Ascending aorta (tissue), 2 donors: ENCODE measurements at regions of chr5 and their contacts with region 1.

Region 1: GRCh38 chr5:126676195-126676624 is 75.5 kb downstream of the PHAX start:
- DNase-seq: peak in 1 of 2 donors; percentile 67
- H3K4me3 ChIP-seq: no peak overlapping the region
- H3K27ac ChIP-seq: no peak overlapping the region
- H3K4me1 ChIP-seq: no peaks in the 10 kb centered on the region
- H3K27me3 ChIP-seq: no peaks in the 10 kb centered on the region
- CTCF ChIP-seq: peak; percentile 61 to 78 (median 63)

Region 2: DNA sequence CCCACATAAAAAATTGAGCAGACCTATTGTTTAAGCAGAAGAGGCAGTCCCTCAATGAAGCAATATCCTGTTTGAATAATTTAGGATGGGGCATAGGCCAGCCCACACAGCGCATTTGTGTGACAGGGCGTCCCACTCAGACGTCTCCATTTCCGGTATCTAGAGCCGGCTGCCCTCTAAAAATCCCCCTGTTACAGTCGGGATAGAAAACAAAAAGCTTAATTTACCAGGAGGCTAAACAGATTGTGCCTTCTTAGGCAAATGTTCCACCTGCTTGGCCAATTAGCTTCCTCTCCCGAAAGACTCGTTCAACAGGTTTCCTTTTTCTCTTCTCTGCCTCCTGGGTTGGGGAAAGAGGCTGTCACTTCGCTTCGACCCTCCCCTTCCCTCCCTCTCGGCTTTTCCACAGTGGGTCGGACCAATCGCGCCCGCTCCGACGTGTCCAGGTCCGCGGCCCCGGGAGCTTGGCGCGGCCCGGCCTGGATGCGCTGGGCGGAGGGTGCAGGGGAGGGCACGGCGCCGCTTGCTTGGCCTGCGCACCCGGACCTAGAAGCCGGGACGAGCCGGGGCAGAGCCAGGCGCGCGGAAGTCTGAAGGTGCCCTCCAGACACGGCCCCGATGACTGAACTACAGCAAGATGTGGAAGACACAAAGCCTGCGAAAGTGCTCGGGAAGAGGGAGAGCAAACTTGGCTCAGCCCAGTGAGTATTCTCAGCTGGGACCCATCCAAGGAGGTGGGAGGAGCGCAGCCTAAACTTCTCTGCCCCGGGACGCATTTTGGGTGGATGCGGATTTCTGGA is 253.0 kb before region 1 on chr5 and contains the start of gene GRAMD2B:
- intact Hi-C with region 1: no loop called
- DNase-seq: peak; percentile 47 to 93
- H3K4me3 ChIP-seq: peak within 1 kb of the TSS; percentile 58 to 64
- H3K27ac ChIP-seq: peak within 1 kb of the TSS; percentile 83 to 91
- H3K4me1 ChIP-seq: peaks cover 0 to 24% of the 10 kb centered on the region in 2 donors
- H3K27me3 ChIP-seq: no peaks in the 10 kb centered on the region
- CTCF ChIP-seq: no peak
- total RNA-seq, gene GRAMD2B: 55.6 TPM

Region 3: GRCh38 chr5:126628102-126628501 is 48.1 kb before region 1 on chr5:
- intact Hi-C with region 1: no loop called
- DNase-seq: no peak
- H3K4me3 ChIP-seq: no peak overlapping the region
- H3K27ac ChIP-seq: no peak overlapping the region
- H3K4me1 ChIP-seq: no peaks in the 10 kb centered on the region
- H3K27me3 ChIP-seq: no peaks in the 10 kb centered on the region
- CTCF ChIP-seq: no peak

Region 4: DNA sequence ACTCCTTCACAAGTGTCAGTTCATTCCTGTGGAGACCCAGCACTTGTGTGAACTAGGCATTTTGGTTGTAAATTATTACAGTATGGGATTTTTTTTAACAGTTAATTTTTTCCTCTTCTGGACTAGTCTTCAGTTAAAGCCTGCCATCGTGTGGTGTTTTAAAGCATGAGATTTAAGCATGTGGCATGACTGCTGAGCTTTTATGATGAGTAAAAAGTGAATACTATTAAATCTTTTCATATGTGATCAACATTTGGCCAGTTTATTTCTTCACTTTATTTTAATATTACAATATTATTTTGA is 125.7 kb after region 1 on chr5:
- intact Hi-C with region 1: loop called (anchors 5 kb)
- DNase-seq: no peak
- H3K4me3 ChIP-seq: no peak overlapping the region
- H3K27ac ChIP-seq: no peak overlapping the region
- H3K4me1 ChIP-seq: peaks cover 0 to 2% of the 10 kb centered on the region in 2 donors
- H3K27me3 ChIP-seq: no peaks in the 10 kb centered on the region
- CTCF ChIP-seq: peak in 1 of 3 experiments; percentile 37